ENCODE measurements at regions of chr1 and their contacts with region 1.

Region 1: GRCh38 chr1:27616441-27616840 is 12.5 kb upstream of the AHDC1 start:
- DNase-seq: no peak
- H3K4me3 ChIP-seq: no peak overlapping the region
- H3K27me3 ChIP-seq: peaks cover 2% of the 10 kb centered on the region; the same call in 1 of the 2 replicates
- CTCF ChIP-seq: no peak

Region 2: GRCh38 chr1:27630859-27631491 is 14.5 kb after region 1 on chr1:
- CTCF ChIA-PET with region 1: interaction called, 10 read pairs
- POLR2A ChIA-PET with region 1: no interaction called
- DNase-seq: no peak
- H3K4me3 ChIP-seq: no peak overlapping the region
- H3K27me3 ChIP-seq: peaks cover 4% of the 10 kb centered on the region; the same call in 1 of the 2 replicates
- CTCF ChIP-seq: no peak

Measured in BJ (cell line).